Activated CD8-positive, alpha-beta T cell treated with anti-CD3 and anti-CD28 coated beads, Interleukin-2, amount 10 ng/mL, durations not matched to agents 7 days and 5 days (primary cell): ENCODE measurements at regions of chr1 and their contacts with region 1.

Region 1: DNA sequence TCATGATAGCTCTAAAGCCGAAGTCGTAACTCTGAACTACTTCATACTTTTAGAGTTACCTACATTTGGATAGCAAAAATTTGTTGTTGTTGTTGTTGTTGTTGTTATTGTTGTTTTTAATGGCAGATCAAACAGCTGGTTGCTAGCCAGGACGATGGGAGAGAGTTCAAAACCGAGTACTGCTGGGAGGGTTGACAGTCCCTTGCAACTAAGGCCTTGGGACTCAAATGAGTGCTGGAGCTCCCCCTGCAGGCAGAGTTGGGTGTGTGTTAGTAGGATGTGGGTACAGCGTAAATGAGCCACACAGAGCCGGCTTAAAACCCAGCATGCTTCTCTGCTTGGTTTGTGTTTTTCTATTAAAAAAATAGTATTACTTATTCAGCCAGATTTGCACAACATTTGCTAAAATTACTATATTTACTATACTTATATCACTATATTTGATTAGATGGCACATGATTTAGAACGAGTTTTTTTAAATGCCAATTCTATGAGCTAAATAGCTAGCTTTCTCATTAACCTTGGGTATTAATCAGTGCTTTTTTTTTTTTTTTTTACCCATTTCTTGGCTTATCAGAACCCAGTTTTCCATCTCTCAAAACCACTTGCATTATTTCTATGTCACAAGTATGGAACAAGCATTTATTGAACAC is 129.2 kb upstream of the SYT6 start:
- DNase-seq: peak; percentile 93
- ATAC-seq: peak; percentile 100
- H3K4me3 Mint-ChIP-seq: no peak overlapping the region
- H3K27ac Mint-ChIP-seq: no peak overlapping the region
- H3K4me1 Mint-ChIP-seq: peaks cover 6% of the 10 kb centered on the region
- H3K27me3 Mint-ChIP-seq: peaks cover 13% of the 10 kb centered on the region

Region 2: DNA sequence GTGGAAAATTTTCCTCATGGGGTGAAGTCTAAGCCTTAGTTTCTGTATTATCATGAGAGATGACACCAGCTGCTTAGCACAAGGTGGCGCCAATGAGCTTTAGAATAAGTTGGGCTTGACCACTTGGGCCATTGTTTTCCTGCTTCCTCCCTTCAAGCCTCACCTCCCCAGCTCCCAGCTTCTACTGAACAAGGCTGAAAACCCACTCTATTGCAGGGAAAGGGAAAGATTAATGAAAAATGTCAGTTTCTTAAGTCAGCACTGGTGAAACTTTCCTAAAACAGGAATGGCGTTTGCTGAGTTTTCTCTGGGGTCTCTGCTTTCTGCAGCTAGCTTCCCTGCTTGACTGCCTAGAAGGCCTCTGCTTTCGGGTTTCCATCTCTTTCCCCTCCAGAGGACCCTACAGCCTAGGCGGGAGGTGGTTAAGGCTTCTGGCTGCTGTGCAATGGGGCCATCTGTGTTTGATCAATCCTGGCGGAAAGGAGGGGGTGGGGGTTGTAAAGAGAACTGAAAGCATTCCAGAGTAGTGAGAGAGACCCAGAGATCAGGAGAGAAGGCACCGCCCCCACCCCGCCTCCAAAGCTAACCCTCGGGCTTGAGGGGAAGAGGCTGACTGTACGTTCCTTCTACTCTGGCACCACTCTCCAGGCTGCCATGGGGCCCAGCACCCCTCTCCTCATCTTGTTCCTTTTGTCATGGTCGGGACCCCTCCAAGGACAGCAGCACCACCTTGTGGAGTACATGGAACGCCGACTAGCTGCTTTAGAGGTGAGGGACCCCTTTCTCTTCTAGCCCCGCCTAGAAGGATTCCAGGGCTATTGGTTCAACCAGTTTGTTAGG is 303.8 kb before region 1 on chr1 and contains the start of gene OLFML3:
- CTCF ChIA-PET with region 1: interaction called, 81 read pairs
- POLR2A ChIA-PET with region 1: no interaction called
- DNase-seq: peak; percentile 76
- ATAC-seq: no peak
- H3K4me3 Mint-ChIP-seq: no peak within 1 kb of the TSS
- H3K27ac Mint-ChIP-seq: peak within 1 kb of the TSS; percentile 19
- H3K4me1 Mint-ChIP-seq: peaks cover 49% of the 10 kb centered on the region
- H3K27me3 Mint-ChIP-seq: no peaks in the 10 kb centered on the region
- total RNA-seq, gene OLFML3: 0.42 to 0.78 TPM

Region 3: DNA sequence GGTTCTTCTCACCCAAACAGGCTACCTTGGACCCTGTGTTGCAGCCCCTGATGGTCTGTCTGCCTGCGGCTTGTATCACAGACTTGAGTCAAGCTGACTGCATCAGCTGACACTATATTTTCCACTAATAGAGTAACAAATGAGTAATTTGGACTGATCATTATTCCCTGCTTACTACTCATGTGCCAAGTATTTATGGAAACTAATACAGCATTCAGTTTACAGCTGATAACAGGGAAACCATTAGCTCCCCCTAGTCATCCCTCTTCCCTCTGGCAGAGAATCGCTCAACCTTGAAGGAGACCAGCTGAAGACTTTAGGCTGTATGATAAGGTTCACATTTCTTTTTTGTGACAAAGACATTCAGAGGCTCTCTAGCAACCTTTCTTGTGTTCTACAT is 12.6 kb before region 1 on chr1:
- CTCF ChIA-PET with region 1: interaction called, 57 read pairs
- POLR2A ChIA-PET with region 1: no interaction called
- DNase-seq: no peak
- ATAC-seq: no peak
- H3K4me3 Mint-ChIP-seq: no peak overlapping the region
- H3K27ac Mint-ChIP-seq: no peak overlapping the region
- H3K4me1 Mint-ChIP-seq: peaks cover 5% of the 10 kb centered on the region
- H3K27me3 Mint-ChIP-seq: peaks cover 21% of the 10 kb centered on the region

Region 4: DNA sequence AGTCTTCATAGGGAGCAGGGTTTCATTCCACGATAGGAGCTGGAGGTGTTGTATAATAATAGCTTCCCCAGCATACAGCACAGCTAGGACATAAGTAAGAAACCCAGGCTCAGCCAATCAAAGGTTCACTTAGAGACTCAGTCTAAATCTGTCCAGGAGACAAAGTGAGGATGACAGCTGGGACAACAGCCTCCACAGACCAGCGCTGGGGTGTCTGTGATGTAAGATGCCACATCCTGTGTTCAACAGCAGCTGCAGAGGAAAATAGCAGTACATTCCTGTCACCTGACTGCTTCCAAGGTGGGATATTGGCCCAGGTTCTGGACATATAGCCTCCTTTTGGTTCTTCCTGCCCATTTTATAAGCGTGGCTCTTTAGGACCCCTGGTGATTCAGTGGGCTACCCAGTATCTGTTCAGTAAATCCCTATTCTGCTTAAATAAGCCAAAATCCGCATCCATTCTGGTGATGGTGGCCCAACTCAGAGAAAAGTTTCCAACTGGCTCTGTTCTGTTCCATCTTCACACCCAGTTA is 47.6 kb after region 1 on chr1:
- CTCF ChIA-PET with region 1: interaction called, 12 read pairs
- POLR2A ChIA-PET with region 1: no interaction called
- DNase-seq: peak; percentile 69
- ATAC-seq: peak; percentile 70
- H3K4me3 Mint-ChIP-seq: no peak overlapping the region
- H3K27ac Mint-ChIP-seq: peak overlapping the region; percentile 43
- H3K4me1 Mint-ChIP-seq: peaks cover 70% of the 10 kb centered on the region
- H3K27me3 Mint-ChIP-seq: peaks cover 2% of the 10 kb centered on the region

Region 5: DNA sequence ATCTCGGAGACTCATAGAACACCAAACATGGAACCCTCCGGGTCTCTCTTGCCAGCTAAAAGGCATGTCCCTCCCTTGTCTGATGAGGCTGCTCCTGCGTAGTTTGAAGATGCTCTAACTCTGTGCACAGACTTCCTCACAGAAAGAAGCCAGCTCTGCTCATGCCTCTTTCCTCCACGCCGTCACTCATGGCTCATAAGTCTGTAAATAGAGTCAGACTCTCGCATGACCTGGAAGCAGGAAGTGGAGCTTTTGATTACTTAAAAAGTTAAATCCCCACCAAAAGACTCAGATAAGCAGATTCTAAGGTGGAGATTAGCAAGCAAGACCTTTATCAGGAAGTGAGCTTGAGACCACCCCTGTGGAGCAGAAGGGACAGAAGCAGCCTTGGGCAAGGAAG is 56.5 kb after region 1 on chr1:
- CTCF ChIA-PET with region 1: interaction called, 19 read pairs
- POLR2A ChIA-PET with region 1: no interaction called
- DNase-seq: no peak
- ATAC-seq: no peak
- H3K4me3 Mint-ChIP-seq: no peak overlapping the region
- H3K27ac Mint-ChIP-seq: no peak overlapping the region
- H3K4me1 Mint-ChIP-seq: peaks cover 66% of the 10 kb centered on the region
- H3K27me3 Mint-ChIP-seq: no peaks in the 10 kb centered on the region

Region 6: DNA sequence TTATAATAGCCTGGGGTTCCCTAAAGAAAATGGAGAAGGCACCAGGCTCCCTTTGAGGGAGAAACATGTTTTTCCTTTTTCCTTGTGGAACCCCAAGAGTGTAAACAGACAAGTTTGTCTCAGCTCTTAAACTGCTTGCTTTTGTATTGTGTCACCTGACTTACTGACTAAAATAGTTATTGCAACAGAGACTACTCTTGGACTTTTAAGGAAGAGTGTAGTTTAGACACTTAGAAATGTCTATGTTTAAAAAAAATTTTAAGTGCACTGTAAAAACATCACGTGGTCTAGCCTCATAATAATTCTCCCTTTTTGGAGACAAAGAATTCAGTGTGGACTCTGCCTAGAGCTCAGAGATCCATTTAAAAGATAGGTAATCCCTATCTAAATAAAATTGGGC is 87.0 kb after region 1 on chr1:
- CTCF ChIA-PET with region 1: no interaction called
- POLR2A ChIA-PET with region 1: no interaction called
- DNase-seq: no peak
- ATAC-seq: no peak
- H3K4me3 Mint-ChIP-seq: no peak overlapping the region
- H3K27ac Mint-ChIP-seq: no peak overlapping the region
- H3K4me1 Mint-ChIP-seq: no peaks in the 10 kb centered on the region
- H3K27me3 Mint-ChIP-seq: no peaks in the 10 kb centered on the region